OCI-LY7 (cell line): ENCODE measurements at regions of chr4 and their contacts with region 1.

Region 1: GRCh38 chr4:140359562-140360427 is 13.7 kb upstream of the SCOC start:
- DNase-seq: peak; percentile 86
- H3K4me3 ChIP-seq: no peak overlapping the region
- H3K27ac ChIP-seq: no peak overlapping the region
- H3K4me1 ChIP-seq: no peaks in the 10 kb centered on the region
- CTCF ChIP-seq: peak; percentile 100

Region 2: DNA sequence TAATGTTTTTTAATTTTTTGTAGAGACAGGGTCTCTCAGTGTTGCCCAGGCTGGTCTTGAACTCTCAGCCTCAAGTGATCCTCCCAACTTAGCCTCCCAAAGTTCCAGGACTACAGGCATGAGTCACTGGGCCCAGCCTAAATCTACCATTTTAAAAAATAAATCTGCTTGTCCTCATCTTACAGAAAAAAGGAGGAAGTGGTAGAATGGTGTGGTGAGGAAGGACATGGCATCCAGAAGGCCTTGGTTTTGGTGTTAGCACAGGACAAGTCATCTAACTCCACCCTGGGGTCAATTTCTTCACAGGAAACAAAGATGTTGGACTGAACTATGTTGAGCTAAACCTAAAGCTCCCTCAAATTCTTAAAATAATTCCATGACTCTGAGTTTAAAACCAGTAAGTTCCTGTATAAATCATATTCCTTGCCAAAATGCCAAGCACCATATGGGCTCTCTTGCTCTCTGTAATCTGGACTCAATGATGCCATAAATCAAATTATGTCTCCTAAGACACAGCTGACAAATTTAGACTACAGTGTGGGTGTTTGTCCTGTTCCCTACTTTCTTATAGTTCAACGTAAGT is 1598.1 kb before region 1 on chr4:
- CTCF ChIA-PET with region 1: no interaction called
- POLR2A ChIA-PET with region 1: no interaction called
- intact Hi-C with region 1: no loop called
- DNase-seq: no peak
- H3K4me3 ChIP-seq: no peak overlapping the region
- H3K27ac ChIP-seq: no peak overlapping the region
- H3K4me1 ChIP-seq: no peaks in the 10 kb centered on the region
- CTCF ChIP-seq: no peak

Region 3: DNA sequence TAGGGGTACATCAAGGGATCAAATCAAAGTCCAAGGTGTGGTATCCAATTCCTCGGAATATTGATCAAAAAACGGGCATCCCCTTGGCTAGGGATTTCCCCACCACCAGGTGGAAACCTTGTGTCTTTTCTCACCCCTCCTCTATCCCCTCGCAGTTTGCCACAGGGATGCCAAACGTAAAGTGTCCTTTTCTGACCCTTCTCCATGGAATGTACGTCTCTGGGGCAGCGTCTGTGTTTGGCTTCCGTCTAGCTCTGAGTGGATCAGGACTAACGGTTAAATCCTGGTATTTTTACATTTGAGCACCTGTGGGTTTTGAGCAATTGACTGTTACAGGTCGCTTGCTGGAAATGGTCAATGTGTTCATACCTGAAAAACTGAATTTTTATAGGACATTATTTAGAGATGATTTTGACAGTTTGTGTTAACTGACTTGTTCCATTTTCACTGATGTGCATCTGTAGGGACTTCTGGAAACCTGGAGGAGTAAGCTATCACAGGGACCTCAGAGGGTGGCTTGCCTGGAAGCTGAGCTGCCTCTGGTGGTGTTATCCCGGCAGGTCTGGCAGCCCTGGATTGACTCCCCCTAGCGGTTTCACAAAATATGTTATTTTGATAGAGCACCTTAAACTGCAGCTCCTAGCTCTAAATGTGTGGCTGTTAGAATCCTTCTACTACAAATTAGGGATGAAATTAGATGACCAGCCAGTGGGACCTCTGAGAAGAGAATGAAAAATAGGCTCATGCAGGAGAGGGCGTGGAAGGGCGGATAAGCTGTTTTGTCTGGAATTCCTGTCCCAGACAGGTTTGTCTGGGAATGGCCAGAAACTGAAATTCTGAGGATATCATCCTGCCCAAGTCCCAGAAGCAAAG is 702.9 kb before region 1 on chr4:
- CTCF ChIA-PET with region 1: no interaction called
- POLR2A ChIA-PET with region 1: no interaction called
- intact Hi-C with region 1: loop called (anchors 5 kb)
- DNase-seq: peak; percentile 81
- H3K4me3 ChIP-seq: no peak overlapping the region
- H3K27ac ChIP-seq: no peak overlapping the region
- H3K4me1 ChIP-seq: peaks cover 3% of the 10 kb centered on the region
- CTCF ChIP-seq: peak; percentile 88

Region 4: GRCh38 chr4:140028676-140029517 is 330.9 kb before region 1 on chr4:
- CTCF ChIA-PET with region 1: no interaction called
- POLR2A ChIA-PET with region 1: no interaction called
- intact Hi-C with region 1: no loop called
- DNase-seq: no peak
- H3K4me3 ChIP-seq: no peak overlapping the region
- H3K27ac ChIP-seq: no peak overlapping the region
- H3K4me1 ChIP-seq: no peaks in the 10 kb centered on the region
- CTCF ChIP-seq: no peak

Region 5: DNA sequence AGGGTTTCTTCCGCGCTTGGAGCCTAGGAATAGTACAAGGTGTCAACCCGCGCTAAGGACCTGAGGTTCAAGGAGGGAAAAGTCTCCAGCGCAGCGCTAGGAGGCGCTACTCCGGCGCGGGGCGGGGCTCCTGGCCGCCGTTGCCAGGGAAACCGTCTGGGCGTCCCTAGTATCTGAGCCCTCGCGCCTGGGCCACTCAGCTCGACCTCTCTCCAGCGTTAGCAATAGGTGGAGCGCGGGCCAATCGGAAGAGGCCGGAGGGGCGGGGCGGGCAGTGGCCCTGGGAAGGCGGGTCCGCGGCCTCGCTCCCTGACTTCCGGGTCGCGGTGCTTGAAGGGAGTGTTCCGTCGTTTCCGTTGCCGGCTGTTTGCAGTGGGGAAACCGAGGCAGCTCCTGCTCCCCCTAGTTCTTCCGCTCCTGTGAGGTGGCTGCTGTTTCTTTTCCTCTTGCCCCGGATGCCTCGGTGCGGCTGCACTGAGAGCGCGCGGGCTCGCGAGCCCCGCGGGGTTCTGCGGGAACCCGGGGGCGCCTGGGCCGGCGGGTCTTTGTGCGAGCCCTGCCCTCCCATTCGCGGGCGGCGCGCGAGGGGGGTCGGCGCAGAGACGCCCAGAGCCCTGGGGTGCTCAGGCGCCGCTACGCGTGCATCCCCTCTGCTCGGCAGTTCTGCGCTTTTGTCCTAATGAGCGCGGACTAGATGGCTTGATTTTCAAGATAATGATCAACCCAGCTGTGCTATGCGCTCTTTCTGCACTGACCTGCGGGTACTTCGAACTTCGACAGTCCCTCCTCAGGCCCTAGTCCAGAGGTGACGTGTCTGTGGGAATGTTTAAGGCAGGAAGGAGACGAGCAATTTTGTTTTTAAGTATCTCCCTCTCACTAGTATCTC is 164.3 kb after region 1 on chr4 and contains the start of gene ELMOD2:
- CTCF ChIA-PET with region 1: interaction called, 3 read pairs
- POLR2A ChIA-PET with region 1: interaction called, 3 read pairs
- intact Hi-C with region 1: loop called (anchors 5 kb)
- DNase-seq: peak; percentile 99
- H3K4me3 ChIP-seq: peak within 1 kb of the TSS; percentile 80
- H3K27ac ChIP-seq: peak within 1 kb of the TSS; percentile 42
- H3K4me1 ChIP-seq: peaks cover 18% of the 10 kb centered on the region
- CTCF ChIP-seq: peak; percentile 95
- total RNA-seq, gene ELMOD2: 16.2 and 20.0 TPM in 2 replicates

Region 6: GRCh38 chr4:140609548-140610425 is 250.0 kb after region 1 on chr4:
- CTCF ChIA-PET with region 1: no interaction called
- POLR2A ChIA-PET with region 1: interaction called, 4 read pairs
- intact Hi-C with region 1: loop called (anchors 1 kb)
- DNase-seq: peak; percentile 75
- H3K4me3 ChIP-seq: no peak overlapping the region
- H3K27ac ChIP-seq: no peak overlapping the region
- H3K4me1 ChIP-seq: peaks cover 32% of the 10 kb centered on the region
- CTCF ChIP-seq: peak; percentile 87

Region 7: DNA sequence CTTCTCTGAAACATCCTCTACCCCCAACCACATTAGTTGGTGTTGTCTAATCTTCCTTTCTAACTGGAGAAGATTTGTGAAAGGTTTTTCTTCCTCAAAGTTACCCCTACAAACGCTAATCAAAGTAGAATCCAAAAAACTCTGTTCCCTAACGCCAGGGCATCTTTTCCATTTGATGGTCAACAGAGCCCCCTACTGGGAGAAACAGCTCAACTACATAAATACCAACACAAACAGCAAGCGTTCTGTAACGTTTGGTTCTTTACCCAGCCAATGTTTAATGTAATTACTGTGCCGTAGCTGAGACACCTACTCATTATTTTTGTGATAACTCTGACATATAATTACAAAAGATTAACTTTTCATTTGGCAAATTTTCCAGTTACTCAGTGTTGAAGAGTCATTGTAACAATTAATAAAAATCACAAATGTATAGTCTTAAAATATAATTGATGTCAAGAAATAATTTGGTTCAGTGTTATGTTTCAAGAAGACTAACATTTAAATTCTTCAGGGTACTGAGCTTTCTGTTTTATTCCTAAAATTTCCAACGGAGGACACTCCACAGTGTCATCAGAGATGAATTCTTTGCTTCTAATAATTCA is 491.3 kb after region 1 on chr4:
- CTCF ChIA-PET with region 1: interaction called, 3 read pairs
- POLR2A ChIA-PET with region 1: no interaction called
- intact Hi-C with region 1: loop called (anchors 1 kb)
- DNase-seq: peak; percentile 86
- H3K4me3 ChIP-seq: no peak overlapping the region
- H3K27ac ChIP-seq: no peak overlapping the region
- H3K4me1 ChIP-seq: peaks cover 27% of the 10 kb centered on the region
- CTCF ChIP-seq: peak; percentile 100